CD4-positive, alpha-beta memory T cell (primary cell): ENCODE measurements at regions of chr17 and their contacts with region 1.

Region 1: DNA sequence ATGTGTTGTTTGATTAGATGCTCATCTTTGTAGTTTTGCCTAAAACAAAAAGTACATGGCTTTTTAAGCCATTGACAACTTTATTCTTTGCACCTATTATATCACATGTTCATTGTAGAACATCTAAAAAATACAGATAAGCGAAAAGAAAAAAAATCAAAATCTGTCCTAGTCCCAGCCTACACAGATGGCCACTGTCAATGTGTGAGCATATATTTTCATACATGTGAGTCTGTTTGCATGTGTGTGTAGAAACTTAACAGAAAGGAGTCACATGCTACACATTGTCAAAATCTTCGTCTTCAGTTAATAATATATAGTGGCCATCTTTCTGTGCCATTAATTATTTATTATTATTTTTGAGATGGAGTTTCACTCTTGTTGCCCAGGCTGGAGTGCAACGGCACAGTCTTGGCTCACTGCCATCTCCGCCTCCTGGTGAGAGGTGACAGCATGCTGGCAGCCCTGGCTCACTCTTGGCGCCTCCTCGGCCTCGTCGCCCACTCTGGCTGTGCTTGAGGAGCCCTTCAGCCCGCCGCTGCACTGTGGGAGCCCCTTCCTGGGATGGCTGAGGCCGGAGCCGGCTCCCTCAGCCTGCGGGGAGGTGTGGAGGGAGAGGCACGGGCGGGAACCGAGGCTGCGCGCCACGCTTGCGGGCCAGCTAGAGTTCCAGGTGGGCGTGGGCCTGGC is 68.5 kb upstream of the AMZ2 start:
- DNase-seq: no peak
- H3K4me3 ChIP-seq: no peak overlapping the region
- H3K4me3 Mint-ChIP-seq: no peak overlapping the region
- H3K27ac ChIP-seq: no peak overlapping the region
- H3K27ac Mint-ChIP-seq: peak overlapping the region in 2 of 7 donors; percentile 40 to 56
- H3K4me1 ChIP-seq: peaks cover 33% of the 10 kb centered on the region
- H3K4me1 Mint-ChIP-seq: peaks cover 17 to 46% (median 30%) of the 10 kb centered on the region in 4 donors
- H3K27me3 ChIP-seq: no peaks in the 10 kb centered on the region
- H3K27me3 Mint-ChIP-seq: no peaks in the 10 kb centered on the region

Region 2: GRCh38 chr17:66441101-66441661 is 1738.2 kb before region 1 on chr17:
- CTCF ChIA-PET with region 1: no interaction called
- POLR2A ChIA-PET with region 1: no interaction called
- intact Hi-C with region 1: no loop called
- DNase-seq: no peak
- H3K4me3 ChIP-seq: no peak overlapping the region
- H3K4me3 Mint-ChIP-seq: peak overlapping the region in 1 of 8 donors; percentile 4
- H3K27ac ChIP-seq: no peak overlapping the region
- H3K27ac Mint-ChIP-seq: peak overlapping the region in 2 of 7 donors; percentile 19 to 38
- H3K4me1 ChIP-seq: peaks cover 19% of the 10 kb centered on the region
- H3K4me1 Mint-ChIP-seq: peaks cover 17 to 52% (median 38%) of the 10 kb centered on the region in 4 donors
- H3K27me3 ChIP-seq: no peaks in the 10 kb centered on the region
- H3K27me3 Mint-ChIP-seq: no peaks in the 10 kb centered on the region

Region 3: DNA sequence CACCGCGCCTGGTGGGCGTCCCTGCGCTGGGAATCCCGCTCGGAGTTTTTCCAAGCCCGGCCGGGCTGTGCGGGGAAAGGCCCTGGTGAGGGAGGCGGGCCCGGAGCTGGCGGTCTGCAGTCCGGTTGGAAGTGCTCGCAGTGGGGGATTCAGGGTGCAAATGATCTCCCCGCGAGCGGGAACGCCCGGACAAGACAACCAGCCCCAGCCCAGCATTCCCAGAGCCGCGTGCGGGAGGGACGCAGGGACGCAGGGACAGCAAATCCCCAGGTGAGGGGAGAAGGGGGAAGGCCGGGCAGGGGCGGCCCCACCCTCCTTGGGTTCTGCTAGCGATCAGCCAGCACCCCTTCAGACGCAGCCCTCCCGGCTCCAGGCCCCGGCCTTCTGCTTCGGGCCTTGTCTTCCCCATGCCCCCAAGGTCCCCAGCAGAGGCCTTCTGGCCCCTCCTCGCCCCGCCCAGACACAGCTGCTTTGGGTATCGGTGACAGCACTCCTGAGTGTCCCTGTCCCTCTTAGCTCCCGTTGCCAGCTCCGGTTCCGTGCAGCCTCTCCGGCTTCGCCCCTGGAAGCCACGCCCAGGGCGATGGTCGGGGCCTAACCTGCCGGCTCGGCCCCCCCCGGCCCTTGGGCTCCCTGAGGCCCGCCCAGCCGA is 17.7 kb after region 1 on chr17:
- CTCF ChIA-PET with region 1: interaction called, 270 read pairs
- POLR2A ChIA-PET with region 1: interaction called, 330 read pairs
- intact Hi-C with region 1: loop called (anchors 1 kb)
- DNase-seq: peak in 3 of 5 donors; percentile 22 to 65 (median 44)
- H3K4me3 ChIP-seq: peak overlapping the region; percentile 36 to 74
- H3K4me3 Mint-ChIP-seq: peak overlapping the region; percentile 77 to 87 (median 82)
- H3K27ac ChIP-seq: peak overlapping the region; percentile 54
- H3K27ac Mint-ChIP-seq: peak overlapping the region in 2 of 7 donors; percentile 63 to 94
- H3K4me1 ChIP-seq: peaks cover 48% of the 10 kb centered on the region
- H3K4me1 Mint-ChIP-seq: peaks cover 19 to 51% (median 31%) of the 10 kb centered on the region in 4 donors
- H3K27me3 ChIP-seq: no peaks in the 10 kb centered on the region
- H3K27me3 Mint-ChIP-seq: no peaks in the 10 kb centered on the region

Region 4: GRCh38 chr17:68247445-68248198 is 68.2 kb after region 1 on chr17 and contains the start of gene AMZ2:
- CTCF ChIA-PET with region 1: interaction called, 7 read pairs
- POLR2A ChIA-PET with region 1: interaction called, 49 read pairs
- intact Hi-C with region 1: loop called (anchors 2 kb)
- DNase-seq: peak; percentile 94 to 99 (median 97)
- H3K4me3 ChIP-seq: peak within 1 kb of the TSS; percentile 76 to 95
- H3K4me3 Mint-ChIP-seq: peak within 1 kb of the TSS; percentile 85 to 94 (median 94)
- H3K27ac ChIP-seq: peak within 1 kb of the TSS; percentile 99
- H3K27ac Mint-ChIP-seq: peak within 1 kb of the TSS; percentile 97 to 99 (median 99)
- H3K4me1 ChIP-seq: peaks cover 37% of the 10 kb centered on the region
- H3K4me1 Mint-ChIP-seq: peaks cover 33 to 59% (median 37%) of the 10 kb centered on the region in 4 donors
- H3K27me3 ChIP-seq: no peaks in the 10 kb centered on the region
- H3K27me3 Mint-ChIP-seq: no peaks in the 10 kb centered on the region
- total RNA-seq, gene AMZ2: 66.1 to 81.2 TPM